Activated B cell treated with CpG ODN at 0.5 μM for 24 hours (primary cell): ENCODE measurements at regions of chr10 and their contacts with region 1.

Region 1: DNA sequence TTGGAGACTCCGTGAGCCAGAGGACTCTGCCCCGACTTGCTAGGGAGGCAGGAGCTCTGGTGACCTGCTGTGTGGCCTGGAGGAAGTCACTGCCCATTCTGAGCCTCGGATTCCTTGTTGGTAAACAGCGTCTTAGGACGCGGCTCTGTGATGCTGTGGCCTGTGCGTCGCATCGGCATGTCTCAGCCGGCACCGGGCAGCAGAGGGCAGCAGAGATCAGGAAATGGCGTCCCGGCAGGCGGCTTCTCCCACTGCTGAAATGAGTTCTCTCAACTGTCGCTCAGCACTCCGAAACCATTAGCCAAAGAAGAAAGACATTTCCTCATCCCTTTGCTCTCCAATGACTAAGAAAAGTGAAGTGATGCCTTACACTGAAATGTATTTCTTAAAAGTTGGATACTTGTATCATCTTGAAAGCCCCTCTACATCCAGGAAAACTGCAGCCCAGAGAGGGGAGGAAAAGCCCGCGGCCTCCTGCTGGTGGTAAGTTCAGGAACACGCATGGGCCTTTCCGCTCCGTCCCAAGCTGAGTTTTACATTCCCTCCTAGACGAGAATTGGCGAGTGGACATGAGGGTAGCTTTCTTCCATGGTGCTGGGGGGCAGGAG is 91.7 kb downstream of the WDR11 start:
- DNase-seq: peak; percentile 61
- ATAC-seq: peak; percentile 87
- H3K4me3 Mint-ChIP-seq: peak overlapping the region; percentile 8
- H3K27ac Mint-ChIP-seq: no peak overlapping the region
- H3K4me1 Mint-ChIP-seq: peaks cover 6% of the 10 kb centered on the region
- H3K27me3 Mint-ChIP-seq: peaks cover 21% of the 10 kb centered on the region
- CTCF ChIP-seq: no peak

Region 2: DNA sequence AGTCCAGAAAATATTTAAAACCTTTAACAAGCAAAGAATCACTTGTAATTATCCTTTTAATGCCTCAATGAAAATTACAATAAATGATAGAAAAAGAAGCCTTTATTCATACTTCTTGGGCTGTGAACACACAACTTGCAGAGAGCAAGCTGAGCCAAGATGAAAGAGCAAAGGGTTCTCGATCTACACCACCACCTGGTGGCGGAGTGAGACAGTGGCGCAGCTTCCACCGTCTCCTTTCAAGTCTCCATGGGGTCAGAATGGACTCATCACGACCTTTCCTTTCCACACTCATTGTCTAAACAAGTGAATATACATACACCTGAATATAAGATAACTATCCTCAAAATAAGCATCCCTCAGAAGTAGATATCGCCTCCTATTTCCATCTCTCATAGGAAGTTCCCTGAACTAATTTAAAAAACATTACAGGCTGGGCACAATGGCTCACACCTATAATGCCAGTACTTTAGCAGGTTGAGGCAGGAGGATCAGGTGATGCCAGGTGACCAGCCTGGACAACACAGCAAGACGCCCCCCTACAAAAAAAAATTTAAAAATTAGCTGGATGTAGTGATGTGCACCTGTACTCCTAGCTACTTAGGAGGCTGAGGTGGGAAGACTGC is 944.2 kb after region 1 on chr10:
- CTCF ChIA-PET with region 1: no interaction called
- POLR2A ChIA-PET with region 1: no interaction called
- intact Hi-C with region 1: loop called (anchors 1 kb)
- DNase-seq: no peak
- ATAC-seq: peak; percentile 37
- H3K4me3 Mint-ChIP-seq: no peak overlapping the region
- H3K27ac Mint-ChIP-seq: no peak overlapping the region
- H3K4me1 Mint-ChIP-seq: no peaks in the 10 kb centered on the region
- H3K27me3 Mint-ChIP-seq: no peaks in the 10 kb centered on the region
- CTCF ChIP-seq: peak; percentile 48

Region 3: DNA sequence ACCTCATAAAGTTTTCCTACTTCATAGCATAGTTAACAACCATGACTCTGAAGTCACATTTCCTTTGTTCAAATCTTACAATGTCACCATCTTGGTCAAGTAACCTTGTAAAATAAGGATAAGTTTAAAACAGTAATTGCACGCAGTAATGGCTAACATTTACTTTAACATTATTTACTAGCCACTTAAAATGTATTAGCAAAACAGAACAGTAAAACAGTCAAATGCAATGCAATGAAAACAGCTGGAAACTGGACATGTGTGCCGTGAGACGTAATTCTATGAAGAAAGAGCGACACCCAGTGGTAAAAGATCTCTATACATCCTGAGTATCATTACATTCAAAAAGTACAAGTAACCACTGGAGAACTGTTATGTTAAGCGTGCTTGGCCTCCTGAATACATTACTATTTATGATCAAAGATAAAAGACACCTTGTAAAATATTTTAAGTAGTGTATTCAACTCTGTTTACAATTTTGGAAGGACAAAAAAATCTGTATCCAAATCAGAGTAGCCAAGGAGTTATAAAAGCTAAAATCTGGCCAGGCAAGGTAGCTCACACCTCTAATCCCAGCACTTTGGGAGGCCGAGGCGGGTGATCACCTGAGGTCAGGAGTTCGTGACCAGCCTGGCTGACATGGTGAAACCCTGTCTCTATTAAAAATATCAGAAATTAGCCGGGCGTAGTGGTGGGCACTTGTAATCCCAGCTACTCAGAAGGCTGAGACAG is 957.7 kb after region 1 on chr10:
- CTCF ChIA-PET with region 1: interaction called, 8 read pairs
- POLR2A ChIA-PET with region 1: no interaction called
- intact Hi-C with region 1: loop called (anchors 1 kb)
- DNase-seq: no peak
- ATAC-seq: peak; percentile 40
- H3K4me3 Mint-ChIP-seq: no peak overlapping the region
- H3K27ac Mint-ChIP-seq: no peak overlapping the region
- H3K4me1 Mint-ChIP-seq: peaks cover 3% of the 10 kb centered on the region
- H3K27me3 Mint-ChIP-seq: no peaks in the 10 kb centered on the region
- CTCF ChIP-seq: no peak

Region 4: GRCh38 chr10:122565728-122566206 is 1622.9 kb after region 1 on chr10:
- CTCF ChIA-PET with region 1: no interaction called
- POLR2A ChIA-PET with region 1: no interaction called
- intact Hi-C with region 1: loop called (anchors 10 kb)
- DNase-seq: no peak
- ATAC-seq: no peak
- H3K4me3 Mint-ChIP-seq: no peak overlapping the region
- H3K27ac Mint-ChIP-seq: no peak overlapping the region
- H3K4me1 Mint-ChIP-seq: no peaks in the 10 kb centered on the region
- H3K27me3 Mint-ChIP-seq: peaks cover 42% of the 10 kb centered on the region
- CTCF ChIP-seq: no peak

Region 5: GRCh38 chr10:122703439-122704118 is 1760.7 kb after region 1 on chr10:
- CTCF ChIA-PET with region 1: no interaction called
- POLR2A ChIA-PET with region 1: no interaction called
- intact Hi-C with region 1: loop called (anchors 5 kb)
- DNase-seq: peak; percentile 23
- ATAC-seq: peak; percentile 49
- H3K4me3 Mint-ChIP-seq: no peak overlapping the region
- H3K27ac Mint-ChIP-seq: no peak overlapping the region
- H3K4me1 Mint-ChIP-seq: no peaks in the 10 kb centered on the region
- H3K27me3 Mint-ChIP-seq: peaks cover 6% of the 10 kb centered on the region
- CTCF ChIP-seq: no peak